ENCODE measurements at regions of chr2 and their contacts with region 1.

Region 1: DNA sequence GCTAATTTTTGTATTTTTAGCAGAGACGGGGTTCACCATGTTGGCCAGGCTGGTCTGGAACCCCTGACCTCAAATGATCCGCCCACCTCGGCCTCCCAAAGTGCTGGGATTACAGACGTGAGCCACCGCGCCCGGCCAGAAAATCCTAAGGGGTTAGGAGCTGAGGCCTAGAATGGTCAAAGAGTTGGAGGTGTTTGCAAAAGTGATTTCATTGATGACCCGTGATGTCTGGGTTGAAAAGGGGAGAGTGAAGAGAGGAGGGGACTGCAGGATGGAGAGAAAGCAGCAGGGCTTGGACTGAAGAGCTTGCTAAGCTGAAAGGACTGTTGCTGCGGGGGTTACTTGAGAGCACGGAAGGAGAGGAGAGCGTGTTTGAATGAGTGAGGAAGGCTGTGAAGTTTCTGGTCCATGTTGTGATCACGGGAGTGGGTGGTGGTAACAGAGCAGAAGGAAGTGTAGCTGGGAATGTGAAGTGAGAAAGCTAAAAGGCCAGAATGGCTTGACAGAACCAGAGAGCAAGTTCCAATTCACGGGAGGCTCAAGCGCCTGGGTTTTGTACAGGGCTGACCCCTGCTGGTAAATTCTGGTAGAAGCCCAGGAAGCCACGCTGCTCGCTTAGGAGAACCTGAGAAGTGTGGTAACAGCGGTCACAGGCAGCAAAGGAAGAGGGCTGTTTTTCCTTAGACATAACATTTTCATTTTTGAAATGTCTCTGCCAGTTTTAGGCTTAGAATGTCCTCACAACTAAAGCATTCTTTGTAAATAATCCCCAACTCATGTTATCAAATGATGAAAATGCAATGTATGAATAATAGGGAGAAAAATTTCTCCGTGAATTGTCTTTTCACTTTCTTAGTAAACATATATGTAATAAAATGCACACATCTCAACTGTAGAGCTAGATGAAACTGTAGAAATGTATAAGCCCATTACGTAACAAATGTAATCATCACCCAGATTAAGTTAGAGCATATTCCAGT is 40.5 kb upstream of the ACTR2 start:
- DNase-seq: peak; percentile 72 to 82
- H3K4me3 ChIP-seq: no peak overlapping the region
- H3K27ac ChIP-seq: no peak overlapping the region
- H3K4me1 ChIP-seq: no peaks in the 10 kb centered on the region
- H3K27me3 ChIP-seq: no peaks in the 10 kb centered on the region
- CTCF ChIP-seq: peak; percentile 54 to 83 (median 74)
- POLR2A ChIP-seq: no peak

Region 2: GRCh38 chr2:64928813-64929212 is 258.3 kb before region 1 on chr2:
- intact Hi-C with region 1: loop called (anchors 5 kb)
- DNase-seq: no peak
- H3K4me3 ChIP-seq: no peak overlapping the region
- H3K27ac ChIP-seq: no peak overlapping the region
- H3K4me1 ChIP-seq: no peaks in the 10 kb centered on the region
- H3K27me3 ChIP-seq: no peaks in the 10 kb centered on the region
- CTCF ChIP-seq: no peak
- POLR2A ChIP-seq: no peak

Region 3: GRCh38 chr2:65340898-65341681 is 153.9 kb after region 1 on chr2:
- intact Hi-C with region 1: no loop called
- DNase-seq: no peak
- H3K4me3 ChIP-seq: no peak overlapping the region
- H3K27ac ChIP-seq: no peak overlapping the region
- H3K4me1 ChIP-seq: peaks cover 0 to 3% of the 10 kb centered on the region in 2 donors
- H3K27me3 ChIP-seq: no peaks in the 10 kb centered on the region
- CTCF ChIP-seq: no peak
- POLR2A ChIP-seq: no peak